Psoas muscle (tissue), 8 donors: ENCODE measurements at regions of chr15 and their contacts with region 1.

Region 1: DNA sequence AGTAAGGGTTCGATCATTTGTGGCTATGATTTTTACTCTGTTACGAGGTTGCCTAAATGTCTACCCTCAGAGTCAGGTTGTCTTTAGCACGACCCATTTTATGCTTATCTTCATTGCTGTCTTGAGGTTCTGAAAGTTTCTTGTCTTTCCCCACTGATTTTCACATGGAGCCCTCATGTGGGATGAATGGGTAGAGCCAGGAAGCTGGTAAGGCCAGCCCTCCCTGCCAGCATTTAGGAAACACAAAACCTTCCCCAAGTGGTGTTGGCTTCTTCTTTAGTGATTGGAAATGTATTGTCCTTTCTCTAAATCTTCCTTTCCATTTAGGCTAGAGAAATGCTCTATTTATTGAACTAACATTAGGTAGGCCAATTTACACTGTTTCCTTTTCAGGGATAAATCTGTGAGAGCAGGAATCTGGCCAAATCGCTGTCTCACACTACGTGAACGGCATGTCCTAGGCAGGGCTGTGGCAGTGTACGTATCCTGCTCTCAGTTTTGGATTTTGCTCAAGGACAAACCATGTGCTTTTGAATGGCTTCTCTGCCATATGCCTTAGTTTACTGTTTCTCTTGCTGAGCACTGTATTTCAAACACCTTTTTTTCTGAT is 43.7 kb downstream of the MYZAP start:
- DNase-seq: peak in 1 of 2 donors; percentile 71
- ATAC-seq: peak; percentile 71 to 91 (median 86)
- H3K4me3 ChIP-seq: no peak overlapping the region
- H3K27ac ChIP-seq: peak overlapping the region; percentile 72
- H3K4me1 ChIP-seq: peaks cover 15% of the 10 kb centered on the region
- H3K27me3 ChIP-seq: no peaks in the 10 kb centered on the region
- CTCF ChIP-seq: no peak

Region 2: GRCh38 chr15:57706405-57707209 is 71.2 kb after region 1 on chr15 and contains the start of gene POLR2M:
- intact Hi-C with region 1: loop called in 1 of 2 experiments (anchors 5 kb)
- DNase-seq: peak; percentile 95 to 98
- ATAC-seq: peak; percentile 95 to 96 (median 96)
- H3K4me3 ChIP-seq: peak within 1 kb of the TSS; percentile 93
- H3K27ac ChIP-seq: peak within 1 kb of the TSS; percentile 96
- H3K4me1 ChIP-seq: peaks cover 31% of the 10 kb centered on the region
- H3K27me3 ChIP-seq: no peaks in the 10 kb centered on the region
- CTCF ChIP-seq: no peak
- total RNA-seq, gene POLR2M: 81.2 to 114 (median 94.2) TPM

Region 3: DNA sequence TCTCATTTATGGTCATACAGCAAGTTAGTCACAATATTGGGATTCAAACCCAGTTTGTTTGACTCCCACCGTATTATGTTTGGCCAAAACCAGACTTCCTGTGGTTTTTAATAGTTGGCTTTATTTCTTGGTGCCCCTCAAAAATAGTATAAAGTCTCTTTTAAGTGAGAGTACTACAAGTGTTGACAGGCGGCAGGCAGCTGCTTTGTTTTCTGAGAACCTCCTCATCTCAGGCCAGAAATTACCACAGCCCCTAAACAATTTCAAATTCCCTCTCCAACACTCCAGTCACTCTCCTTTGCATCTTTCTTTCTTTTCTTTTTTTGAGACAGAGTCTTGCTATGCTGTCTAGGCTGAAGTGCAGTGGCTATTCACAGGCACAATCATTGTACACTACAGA is 192.6 kb after region 1 on chr15:
- intact Hi-C with region 1: no loop called
- DNase-seq: no peak
- ATAC-seq: no peak
- H3K4me3 ChIP-seq: no peak overlapping the region
- H3K27ac ChIP-seq: no peak overlapping the region
- H3K4me1 ChIP-seq: no peaks in the 10 kb centered on the region
- H3K27me3 ChIP-seq: peaks cover 0 to 7% (median 3%) of the 10 kb centered on the region in 3 donors
- CTCF ChIP-seq: no peak